Naive thymus-derived CD4-positive, alpha-beta T cell (primary cell): ENCODE measurements at regions of chr6 and their contacts with region 1.

Region 1: GRCh38 chr6:7341989-7342742 is 29.2 kb upstream of the SSR1 start:
- DNase-seq: no peak
- ATAC-seq: no peak
- H3K4me3 ChIP-seq: no peak overlapping the region
- H3K4me3 Mint-ChIP-seq: peak overlapping the region in 1 of 10 donors; percentile 14
- H3K27ac ChIP-seq: no peak overlapping the region
- H3K27ac Mint-ChIP-seq: no peak overlapping the region
- H3K4me1 ChIP-seq: no peaks in the 10 kb centered on the region
- H3K4me1 Mint-ChIP-seq: peaks cover 0 to 6% (median 0%) of the 10 kb centered on the region in 7 donors
- H3K27me3 ChIP-seq: no peaks in the 10 kb centered on the region
- H3K27me3 Mint-ChIP-seq: peaks cover 11 to 32% (median 14%) of the 10 kb centered on the region in 5 donors

Region 2: GRCh38 chr6:6479785-6480184 is 862.4 kb before region 1 on chr6:
- CTCF ChIA-PET with region 1: no interaction called
- POLR2A ChIA-PET with region 1: no interaction called
- intact Hi-C with region 1: no loop called
- DNase-seq: no peak
- ATAC-seq: no peak
- H3K4me3 ChIP-seq: no peak overlapping the region
- H3K4me3 Mint-ChIP-seq: no peak overlapping the region
- H3K27ac ChIP-seq: no peak overlapping the region
- H3K27ac Mint-ChIP-seq: no peak overlapping the region
- H3K4me1 ChIP-seq: no peaks in the 10 kb centered on the region
- H3K4me1 Mint-ChIP-seq: no peaks in the 10 kb centered on the region
- H3K27me3 ChIP-seq: peaks cover 0 to 2% of the 10 kb centered on the region in 2 donors
- H3K27me3 Mint-ChIP-seq: peaks cover 37 to 45% (median 39%) of the 10 kb centered on the region in 5 donors

Region 3: GRCh38 chr6:6793388-6794250 is 548.5 kb before region 1 on chr6:
- CTCF ChIA-PET with region 1: no interaction called
- POLR2A ChIA-PET with region 1: no interaction called
- intact Hi-C with region 1: no loop called
- DNase-seq: no peak
- ATAC-seq: peak; percentile 78
- H3K4me3 ChIP-seq: no peak overlapping the region
- H3K4me3 Mint-ChIP-seq: peak overlapping the region in 4 of 10 donors; percentile 3 to 37 (median 24)
- H3K27ac ChIP-seq: no peak overlapping the region
- H3K27ac Mint-ChIP-seq: peak overlapping the region in 2 of 9 donors; percentile 6 to 37
- H3K4me1 ChIP-seq: no peaks in the 10 kb centered on the region
- H3K4me1 Mint-ChIP-seq: peaks cover 5 to 52% (median 7%) of the 10 kb centered on the region in 7 donors
- H3K27me3 ChIP-seq: no peaks in the 10 kb centered on the region
- H3K27me3 Mint-ChIP-seq: no peaks in the 10 kb centered on the region

Region 4: GRCh38 chr6:6960571-6961251 is 381.5 kb before region 1 on chr6:
- CTCF ChIA-PET with region 1: no interaction called
- POLR2A ChIA-PET with region 1: no interaction called
- intact Hi-C with region 1: no loop called
- DNase-seq: no peak
- ATAC-seq: no peak
- H3K4me3 ChIP-seq: no peak overlapping the region
- H3K4me3 Mint-ChIP-seq: no peak overlapping the region
- H3K27ac ChIP-seq: no peak overlapping the region
- H3K27ac Mint-ChIP-seq: no peak overlapping the region
- H3K4me1 ChIP-seq: no peaks in the 10 kb centered on the region
- H3K4me1 Mint-ChIP-seq: peaks cover 0 to 6% (median 0%) of the 10 kb centered on the region in 7 donors
- H3K27me3 ChIP-seq: no peaks in the 10 kb centered on the region
- H3K27me3 Mint-ChIP-seq: peaks cover 0 to 30% (median 0%) of the 10 kb centered on the region in 5 donors

Region 5: GRCh38 chr6:7276199-7276524 is 66.0 kb before region 1 on chr6:
- CTCF ChIA-PET with region 1: interaction called, 4 read pairs
- POLR2A ChIA-PET with region 1: no interaction called
- intact Hi-C with region 1: loop called in 1 of 2 experiments (anchors 1 kb)
- DNase-seq: no peak
- ATAC-seq: no peak
- H3K4me3 ChIP-seq: no peak overlapping the region
- H3K4me3 Mint-ChIP-seq: no peak overlapping the region
- H3K27ac ChIP-seq: no peak overlapping the region
- H3K27ac Mint-ChIP-seq: peak overlapping the region in 1 of 9 donors; percentile 56
- H3K4me1 ChIP-seq: no peaks in the 10 kb centered on the region
- H3K4me1 Mint-ChIP-seq: peaks cover 6 to 13% (median 10%) of the 10 kb centered on the region in 7 donors
- H3K27me3 ChIP-seq: no peaks in the 10 kb centered on the region
- H3K27me3 Mint-ChIP-seq: no peaks in the 10 kb centered on the region